ENCODE measurements at regions of chr16 and their contacts with region 1.

Region 1: GRCh38 chr16:714558-715476 is at the start of gene METRN:
- DNase-seq: peak; percentile 94
- H3K4me3 ChIP-seq: peak within 1 kb of the TSS; percentile 55 to 83 (median 68)
- H3K27ac ChIP-seq: peak within 1 kb of the TSS in 3 of 4 donors; percentile 54 to 66 (median 58)
- H3K4me1 ChIP-seq: peaks cover 18 to 47% (median 36%) of the 10 kb centered on the region in 4 donors
- H3K27me3 ChIP-seq: peaks cover 54% of the 10 kb centered on the region
- CTCF ChIP-seq: no peak
- EP300 ChIP-seq: no peak
- POLR2A ChIP-seq: no peak
- total RNA-seq, gene METRN: 4.9 to 47.2 (median 35.2) TPM

Region 2: GRCh38 chr16:740764-741505 is 26.1 kb after region 1 on chr16 and contains the start of gene CIAO3:
- in situ Hi-C with region 1: no loop called
- intact Hi-C with region 1: loop called (anchors 2 kb)
- DNase-seq: peak; percentile 91
- H3K4me3 ChIP-seq: peak within 1 kb of the TSS; percentile 78 to 86 (median 84)
- H3K27ac ChIP-seq: peak within 1 kb of the TSS; percentile 75 to 87 (median 81)
- H3K4me1 ChIP-seq: peaks cover 7 to 20% (median 14%) of the 10 kb centered on the region in 4 donors
- H3K27me3 ChIP-seq: peaks cover 3% of the 10 kb centered on the region
- CTCF ChIP-seq: peak; percentile 79 to 99 (median 97)
- EP300 ChIP-seq: no peak
- POLR2A ChIP-seq: peak; percentile 83
- total RNA-seq, gene CIAO3: 59.1 to 346 (median 102) TPM

Region 3: GRCh38 chr16:788394-789126 is 73.7 kb after region 1 on chr16 and contains the start of gene CHTF18:
- in situ Hi-C with region 1: loop called in 2 of 4 experiments (anchors 5 to 10 kb)
- intact Hi-C with region 1: loop called (anchors 5 kb)
- DNase-seq: peak; percentile 94
- H3K4me3 ChIP-seq: peak within 1 kb of the TSS; percentile 65 to 99 (median 96)
- H3K27ac ChIP-seq: peak within 1 kb of the TSS; percentile 73 to 91 (median 85)
- H3K4me1 ChIP-seq: peaks cover 14 to 22% (median 18%) of the 10 kb centered on the region in 4 donors
- H3K27me3 ChIP-seq: peaks cover 4% of the 10 kb centered on the region
- CTCF ChIP-seq: no peak
- EP300 ChIP-seq: no peak
- POLR2A ChIP-seq: no peak
- total RNA-seq, gene CHTF18: 4.6 to 33.4 (median 12.9) TPM

Measured in transverse colon (tissue), 4 donors.